Posterior vena cava (tissue), 2 donors: ENCODE measurements at regions of chr1 and their contacts with region 1.

Region 1: DNA sequence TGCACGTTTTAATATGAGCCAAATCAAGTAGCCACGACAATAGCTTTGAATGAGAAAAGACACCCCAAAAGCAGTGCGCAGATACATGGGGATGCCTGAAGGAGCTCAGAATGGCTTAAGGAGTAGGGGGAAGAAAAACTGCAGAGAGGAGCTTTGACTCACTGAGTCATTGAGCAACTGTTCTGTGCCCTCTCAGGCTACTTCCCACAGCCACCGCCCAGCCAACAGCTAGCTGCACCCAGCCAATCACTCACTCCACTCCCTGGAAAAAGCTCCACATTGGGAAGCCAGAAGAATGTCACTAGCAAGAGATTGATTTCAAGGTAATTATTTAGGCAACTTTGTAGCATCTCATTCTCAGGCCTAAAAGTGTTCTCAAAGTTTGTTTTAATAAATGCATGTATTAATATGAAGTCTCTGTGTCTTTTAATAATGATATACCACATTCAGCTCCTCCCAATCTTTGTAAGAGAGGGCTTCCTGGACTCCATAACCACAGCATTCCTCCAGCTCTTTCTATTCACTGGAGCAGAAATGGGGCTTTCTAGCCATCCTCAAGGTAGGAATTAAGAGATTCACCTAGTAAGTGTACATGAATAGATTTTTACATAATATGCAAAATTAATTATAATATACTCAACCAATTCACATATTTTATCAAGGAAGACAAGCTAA is 16.8 kb downstream of the DUSP10 start:
- DNase-seq: peak; percentile 89

Region 2: DNA sequence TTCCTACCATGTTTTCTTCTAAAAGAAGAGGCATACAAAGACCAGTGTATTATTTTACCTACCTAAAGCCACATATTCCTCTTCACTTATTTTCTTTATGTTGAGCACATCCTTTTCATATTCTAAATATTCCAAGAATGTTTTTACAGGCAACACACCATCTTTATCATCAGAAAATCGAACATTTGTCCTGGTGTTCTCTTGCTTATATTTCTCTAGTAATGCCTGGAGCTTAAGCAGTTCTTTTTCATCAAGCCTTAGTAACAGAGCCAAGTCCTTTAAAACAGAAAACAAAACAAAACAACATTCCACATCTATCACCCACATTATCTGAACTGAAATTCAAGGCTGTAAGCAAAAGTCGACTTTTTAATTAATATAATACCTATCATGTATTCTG is 1542.4 kb before region 1 on chr1:
- intact Hi-C with region 1: loop called in 1 of 2 experiments (anchors 5 kb)
- DNase-seq: no peak

Region 3: GRCh38 chr1:223670458-223671168 is 1945.5 kb after region 1 on chr1:
- intact Hi-C with region 1: loop called in 1 of 2 experiments (anchors 5 kb)
- DNase-seq: no peak